ENCODE measurements at regions of chr9 and their contacts with region 1.

Region 1: DNA sequence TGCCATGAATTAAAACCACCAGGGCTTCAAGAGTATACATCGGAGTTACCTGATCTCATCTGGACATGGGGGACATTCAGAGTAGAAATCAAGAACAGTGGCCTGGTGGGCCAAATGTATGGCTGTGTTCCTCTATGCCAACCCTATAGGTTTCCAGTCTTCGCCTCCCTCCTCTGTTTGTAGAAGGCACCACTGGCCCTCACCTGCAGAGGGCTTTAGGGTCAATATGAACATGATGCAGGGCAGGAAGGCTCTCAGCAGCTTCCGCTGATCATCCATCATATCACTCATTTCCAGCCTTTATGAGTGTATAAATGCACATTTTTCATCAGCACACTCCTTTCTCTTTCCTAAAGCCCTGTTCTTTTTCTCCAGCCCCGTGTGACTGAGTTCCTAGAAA is 555.5 kb upstream of the BRINP1 start:
- DNase-seq: no peak
- H3K4me3 ChIP-seq: no peak overlapping the region
- H3K27ac ChIP-seq: no peak overlapping the region
- H3K4me1 ChIP-seq: no peaks in the 10 kb centered on the region
- H3K27me3 ChIP-seq: no peaks in the 10 kb centered on the region
- CTCF ChIP-seq: no peak
- POLR2A ChIP-seq: no peak

Region 2: DNA sequence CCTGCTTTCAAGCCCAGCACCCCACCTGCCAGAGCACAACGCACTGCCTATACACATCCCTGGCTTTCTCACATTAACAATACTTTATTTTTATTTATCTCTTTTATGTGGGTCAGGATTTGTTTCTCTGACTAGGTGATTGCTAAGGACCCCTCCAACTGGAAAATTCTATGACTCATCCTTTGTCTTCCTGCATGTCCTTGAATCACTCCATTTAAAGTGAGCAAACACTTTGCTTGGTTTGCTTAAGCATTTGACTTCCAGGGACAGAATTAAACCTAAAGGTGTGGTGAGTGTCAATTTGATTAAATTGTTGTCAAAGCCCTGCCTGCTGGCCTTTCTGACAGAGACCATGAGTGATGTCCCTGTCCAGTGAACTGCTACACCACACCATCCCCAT is 19.0 kb before region 1 on chr9:
- intact Hi-C with region 1: loop called (anchors 2 kb)
- DNase-seq: no peak
- H3K4me3 ChIP-seq: no peak overlapping the region
- H3K27ac ChIP-seq: no peak overlapping the region
- H3K4me1 ChIP-seq: no peaks in the 10 kb centered on the region
- H3K27me3 ChIP-seq: no peaks in the 10 kb centered on the region
- CTCF ChIP-seq: no peak
- POLR2A ChIP-seq: no peak

Measured in thyroid gland (tissue), 4 donors.